ENCODE measurements at regions of chrX and their contacts with region 1.

Region 1: DNA sequence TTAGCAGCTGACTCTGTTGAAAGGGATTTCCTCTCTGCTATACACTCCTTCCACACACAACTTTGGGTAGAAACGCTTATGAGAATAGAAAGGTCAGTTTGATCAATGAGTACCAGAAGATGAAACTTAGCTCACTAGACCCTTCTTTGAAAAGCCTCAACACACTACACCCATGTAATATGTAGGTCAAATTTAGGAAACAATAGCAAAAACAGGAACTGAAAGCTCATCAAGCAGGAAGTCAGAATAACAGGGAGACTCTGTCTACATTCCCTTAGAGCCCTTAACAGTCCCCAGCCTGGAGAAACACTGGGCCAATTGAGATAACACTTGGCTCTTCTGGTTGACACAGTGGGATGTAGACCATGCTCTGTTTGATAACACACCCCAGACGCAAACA is 30.7 kb downstream of the SRPX2 start:
- DNase-seq: no peak
- H3K4me3 ChIP-seq: no peak overlapping the region
- CTCF ChIP-seq: no peak

Region 2: GRCh38 chrX:100636321-100636991 is 38.2 kb before region 1 on chrX and contains the start of gene TSPAN6:
- in situ Hi-C with region 1: loop called (anchors 5 kb)
- DNase-seq: peak; percentile 74
- H3K4me3 ChIP-seq: peak within 1 kb of the TSS; percentile 54
- CTCF ChIP-seq: peak; percentile 53

Measured in astrocyte of the cerebellum (primary cell).